ENCODE measurements at regions of chr10 and their contacts with region 1.

Region 1: GRCh38 chr10:70903262-70903921 is 15.0 kb upstream of the PCBD1 start:
- DNase-seq: peak; percentile 56
- H3K27ac ChIP-seq: no peak overlapping the region
- CTCF ChIP-seq: peak; percentile 74

Region 2: GRCh38 chr10:70656489-70656888 is 246.9 kb before region 1 on chr10:
- CTCF ChIA-PET with region 1: no interaction called
- POLR2A ChIA-PET with region 1: no interaction called
- DNase-seq: peak; percentile 96
- H3K27ac ChIP-seq: no peak overlapping the region
- CTCF ChIP-seq: no peak

Region 3: GRCh38 chr10:70920565-70920964 is 17.2 kb after region 1 on chr10:
- CTCF ChIA-PET with region 1: interaction called, 10 read pairs
- POLR2A ChIA-PET with region 1: interaction called, 3 read pairs
- DNase-seq: peak; percentile 41
- H3K27ac ChIP-seq: no peak overlapping the region
- CTCF ChIP-seq: no peak

Measured in RWPE1 (cell line).